ENCODE measurements at regions of chr3 and their contacts with region 1.

Region 1: DNA sequence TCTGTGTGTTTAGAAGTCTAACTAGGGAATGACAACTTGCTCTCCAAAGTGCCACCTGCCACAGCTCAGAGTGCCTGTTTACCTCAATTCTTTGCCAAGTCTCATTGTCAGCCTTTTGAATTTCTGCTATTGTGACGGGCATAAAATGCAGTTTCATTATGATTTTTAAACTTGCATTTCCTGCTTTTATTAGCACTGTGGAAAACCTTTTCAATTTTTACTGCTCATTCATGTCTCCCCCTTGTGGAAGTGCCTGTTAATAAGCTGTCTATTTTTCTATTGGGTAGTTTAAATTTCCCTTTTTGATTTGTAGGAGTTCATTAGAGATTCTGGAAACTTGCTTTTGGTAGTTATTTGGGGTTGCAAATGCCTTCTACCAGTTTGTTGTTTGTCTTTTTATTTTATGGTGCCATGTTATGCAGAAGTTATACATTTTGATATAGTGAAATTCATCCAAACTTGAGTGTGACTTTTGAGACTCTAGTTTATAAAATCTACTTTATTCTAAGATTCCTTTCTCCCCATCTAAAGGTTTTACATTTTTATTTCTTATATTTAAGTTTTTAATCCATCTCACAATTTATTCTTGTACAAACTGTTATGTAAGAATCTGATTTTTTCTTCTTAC is 53.9 kb upstream of the FRMD4B start:
- DNase-seq: peak in 1 of 4 donors; percentile 61
- ATAC-seq: peak; percentile 80
- H3K4me3 ChIP-seq: no peak overlapping the region
- H3K27ac ChIP-seq: no peak overlapping the region
- H3K4me1 ChIP-seq: peaks cover 0 to 13% of the 10 kb centered on the region in 2 donors
- H3K27me3 ChIP-seq: no peaks in the 10 kb centered on the region
- CTCF ChIP-seq: peak; percentile 33 to 66

Region 2: DNA sequence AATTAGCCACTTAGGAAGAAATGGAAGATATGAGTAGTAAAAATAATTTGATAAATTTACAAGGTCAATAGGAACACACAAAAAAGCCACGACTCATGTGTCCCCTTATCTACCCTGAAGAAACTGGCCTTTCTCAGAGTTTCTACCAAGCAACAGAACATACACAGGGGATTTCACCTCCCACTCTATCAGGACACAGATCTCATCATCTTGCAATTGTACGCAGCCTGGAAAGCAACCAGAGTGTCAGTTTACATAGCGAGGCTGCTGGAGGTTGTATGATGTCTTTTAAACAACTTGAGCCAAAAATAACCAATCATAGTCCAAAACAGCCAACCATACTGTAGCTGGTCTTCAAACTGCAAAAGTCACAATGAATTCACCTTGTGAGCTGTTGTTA is 297.7 kb before region 1 on chr3:
- intact Hi-C with region 1: no loop called
- DNase-seq: no peak
- ATAC-seq: no peak
- H3K4me3 ChIP-seq: no peak overlapping the region
- H3K27ac ChIP-seq: no peak overlapping the region
- H3K4me1 ChIP-seq: no peaks in the 10 kb centered on the region
- H3K27me3 ChIP-seq: no peaks in the 10 kb centered on the region
- CTCF ChIP-seq: no peak

Region 3: GRCh38 chr3:69671082-69671952 is 231.6 kb after region 1 on chr3:
- intact Hi-C with region 1: loop called in 1 of 2 experiments (anchors 10 kb)
- DNase-seq: peak in 1 of 4 donors; percentile 56
- ATAC-seq: peak; percentile 71
- H3K4me3 ChIP-seq: no peak overlapping the region
- H3K27ac ChIP-seq: no peak overlapping the region
- H3K4me1 ChIP-seq: no peaks in the 10 kb centered on the region
- H3K27me3 ChIP-seq: no peaks in the 10 kb centered on the region
- CTCF ChIP-seq: peak; percentile 63 to 67

Region 4: DNA sequence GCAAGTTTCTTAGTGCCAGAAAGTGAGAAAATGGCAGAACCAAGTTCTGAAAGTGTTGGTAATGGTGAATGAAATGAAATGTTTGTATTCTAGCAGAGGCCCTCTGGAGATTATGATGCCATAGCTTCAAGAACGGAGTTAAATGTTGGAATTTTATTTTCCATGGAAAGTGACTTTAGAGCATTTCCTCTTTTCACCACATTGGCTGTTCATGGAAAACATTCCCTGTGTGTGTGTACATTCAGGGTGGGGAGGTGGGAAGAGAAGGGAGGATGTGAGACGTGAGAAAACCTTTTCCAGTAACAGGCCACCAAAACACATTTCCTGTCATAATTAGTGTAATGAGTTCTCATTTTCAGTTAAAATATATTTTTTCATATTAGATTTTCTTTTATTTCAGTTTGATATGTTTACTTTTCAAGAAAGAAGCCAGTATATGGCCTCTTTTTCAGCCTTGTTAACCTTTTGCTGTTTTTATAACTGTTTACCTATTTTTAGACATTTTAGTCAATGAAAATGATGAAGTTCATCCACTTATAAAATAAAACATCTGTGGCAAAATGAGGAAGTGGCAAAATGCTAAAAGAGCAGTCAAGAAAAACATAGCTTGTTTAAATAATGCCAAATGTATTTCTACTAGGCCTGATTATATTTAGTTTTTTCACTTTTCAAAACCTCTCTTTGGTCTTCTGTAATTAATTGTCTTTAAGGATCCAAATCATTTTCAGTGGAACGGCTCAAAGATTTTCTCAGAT is 581.3 kb after region 1 on chr3:
- intact Hi-C with region 1: no loop called
- DNase-seq: no peak
- ATAC-seq: no peak
- H3K4me3 ChIP-seq: peak overlapping the region in 1 of 2 donors; percentile 0
- H3K27ac ChIP-seq: no peak overlapping the region
- H3K4me1 ChIP-seq: no peaks in the 10 kb centered on the region
- H3K27me3 ChIP-seq: no peaks in the 10 kb centered on the region
- CTCF ChIP-seq: no peak

Measured in left lung (tissue), 14 donors.